ENCODE measurements at regions of chr2 and their contacts with region 1.

Region 1: GRCh38 chr2:23824777-23825212 is 102.1 kb downstream of the ATAD2B start:
- DNase-seq: no peak
- ATAC-seq: peak; percentile 65
- H3K4me3 Mint-ChIP-seq: no peak overlapping the region
- H3K27ac Mint-ChIP-seq: no peak overlapping the region
- H3K4me1 Mint-ChIP-seq: peaks cover 2% of the 10 kb centered on the region
- H3K27me3 Mint-ChIP-seq: no peaks in the 10 kb centered on the region
- CTCF ChIP-seq: peak; percentile 18

Region 2: GRCh38 chr2:23767876-23768621 is 56.7 kb before region 1 on chr2:
- CTCF ChIA-PET with region 1: no interaction called
- POLR2A ChIA-PET with region 1: no interaction called
- intact Hi-C with region 1: no loop called
- DNase-seq: no peak
- ATAC-seq: no peak
- H3K4me3 Mint-ChIP-seq: no peak overlapping the region
- H3K27ac Mint-ChIP-seq: no peak overlapping the region
- H3K4me1 Mint-ChIP-seq: peaks cover 18% of the 10 kb centered on the region
- H3K27me3 Mint-ChIP-seq: no peaks in the 10 kb centered on the region
- CTCF ChIP-seq: no peak

Region 3: DNA sequence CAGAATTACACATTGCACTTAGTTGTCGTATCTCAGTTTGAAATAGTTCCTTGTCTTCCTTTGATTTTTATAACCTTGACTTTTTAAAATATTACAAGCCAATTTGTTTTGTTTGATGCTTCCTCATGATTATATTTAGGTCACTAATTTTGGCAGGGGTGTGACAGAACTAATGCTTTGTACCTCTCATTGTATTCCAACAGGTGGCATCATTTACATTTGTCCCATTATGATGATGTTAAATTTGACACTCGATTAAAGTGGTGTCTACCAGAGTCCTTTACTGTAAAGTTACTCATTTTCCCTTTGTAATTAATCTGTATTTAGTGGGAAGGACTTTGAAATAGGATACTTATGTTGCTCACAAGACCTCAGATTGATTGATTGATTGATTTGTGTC is 163.6 kb after region 1 on chr2:
- CTCF ChIA-PET with region 1: interaction called, 4 read pairs
- POLR2A ChIA-PET with region 1: no interaction called
- intact Hi-C with region 1: loop called (anchors 10 kb)
- DNase-seq: no peak
- ATAC-seq: no peak
- H3K4me3 Mint-ChIP-seq: no peak overlapping the region
- H3K27ac Mint-ChIP-seq: no peak overlapping the region
- H3K4me1 Mint-ChIP-seq: no peaks in the 10 kb centered on the region
- H3K27me3 Mint-ChIP-seq: no peaks in the 10 kb centered on the region
- CTCF ChIP-seq: no peak

Region 4: DNA sequence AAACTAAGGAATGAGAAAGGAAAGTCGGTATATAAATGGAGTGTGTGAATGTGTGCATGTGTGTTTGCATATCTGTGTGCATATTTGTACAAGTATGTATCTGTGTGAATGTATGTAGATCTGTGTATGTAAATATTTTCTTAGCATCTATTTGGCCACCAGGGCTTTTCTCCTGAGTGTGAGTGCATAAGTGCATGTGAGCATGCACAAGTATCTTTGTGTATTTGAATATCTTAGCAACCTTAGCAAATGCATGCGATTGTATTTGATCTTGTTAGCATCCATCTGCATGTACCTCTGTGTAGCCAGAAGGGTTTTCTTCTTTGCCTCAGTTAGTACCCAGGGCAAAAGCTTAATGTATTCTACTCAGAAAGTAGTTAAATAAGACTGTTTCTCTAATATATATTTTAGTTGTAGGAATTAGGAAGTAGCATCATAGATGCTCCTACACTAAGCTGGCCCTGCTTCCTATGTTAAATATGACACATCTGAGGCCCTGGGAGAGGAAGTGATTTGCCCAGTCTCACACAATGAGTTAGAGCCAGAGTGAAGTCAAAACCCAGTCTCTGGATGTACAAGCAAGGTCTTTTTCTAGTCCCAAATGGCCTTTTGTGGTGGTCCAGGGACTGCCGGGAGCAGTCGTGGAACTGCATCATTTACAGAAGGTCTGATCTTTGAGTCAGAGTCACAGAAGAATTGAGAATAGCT is 233.9 kb after region 1 on chr2:
- CTCF ChIA-PET with region 1: interaction called, 5 read pairs
- POLR2A ChIA-PET with region 1: no interaction called
- intact Hi-C with region 1: loop called (anchors 1 kb)
- DNase-seq: no peak
- ATAC-seq: no peak
- H3K4me3 Mint-ChIP-seq: no peak overlapping the region
- H3K27ac Mint-ChIP-seq: no peak overlapping the region
- H3K4me1 Mint-ChIP-seq: no peaks in the 10 kb centered on the region
- H3K27me3 Mint-ChIP-seq: no peaks in the 10 kb centered on the region
- CTCF ChIP-seq: no peak

Region 5: DNA sequence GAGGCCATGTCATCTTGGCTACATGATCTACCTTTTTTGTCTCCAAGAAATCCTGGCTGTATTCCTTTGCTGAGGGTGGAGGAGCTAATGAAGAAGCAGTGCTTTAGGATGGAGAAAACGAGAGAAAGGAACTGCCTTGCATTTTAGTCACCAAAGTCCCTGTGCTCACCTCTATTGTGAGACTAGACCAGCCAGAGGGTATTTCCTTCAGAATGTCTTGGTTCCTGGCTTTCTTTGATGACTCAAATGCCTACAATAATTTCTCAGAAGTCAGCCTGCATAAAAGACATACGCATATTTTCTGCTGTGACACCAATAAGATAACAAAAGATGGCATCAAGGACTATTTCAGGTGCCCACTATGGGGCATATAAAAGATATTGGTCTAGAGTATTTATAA is 240.5 kb after region 1 on chr2:
- CTCF ChIA-PET with region 1: interaction called, 14 read pairs
- POLR2A ChIA-PET with region 1: no interaction called
- intact Hi-C with region 1: loop called (anchors 1 kb)
- DNase-seq: no peak
- ATAC-seq: no peak
- H3K4me3 Mint-ChIP-seq: no peak overlapping the region
- H3K27ac Mint-ChIP-seq: no peak overlapping the region
- H3K4me1 Mint-ChIP-seq: no peaks in the 10 kb centered on the region
- H3K27me3 Mint-ChIP-seq: no peaks in the 10 kb centered on the region
- CTCF ChIP-seq: no peak

Region 6: GRCh38 chr2:24164125-24164973 is 339.6 kb after region 1 on chr2:
- CTCF ChIA-PET with region 1: interaction called, 7 read pairs
- POLR2A ChIA-PET with region 1: interaction called, 4 read pairs
- intact Hi-C with region 1: loop called (anchors 1 kb)
- DNase-seq: peak; percentile 40
- ATAC-seq: peak; percentile 81
- H3K4me3 Mint-ChIP-seq: peak overlapping the region; percentile 61
- H3K27ac Mint-ChIP-seq: peak overlapping the region; percentile 71
- H3K4me1 Mint-ChIP-seq: peaks cover 12% of the 10 kb centered on the region
- H3K27me3 Mint-ChIP-seq: no peaks in the 10 kb centered on the region
- CTCF ChIP-seq: peak; percentile 16